ENCODE measurements at regions of chr17 and their contacts with region 1.

Region 1: GRCh38 chr17:29617125-29617480 is 5.6 kb downstream of the CORO6 start:
- DNase-seq: peak; percentile 77 to 91 (median 88)
- ATAC-seq: peak; percentile 80
- H3K4me3 ChIP-seq: peak overlapping the region; percentile 80
- H3K4me3 Mint-ChIP-seq: peak overlapping the region; percentile 78 to 93 (median 88)
- H3K27ac ChIP-seq: peak overlapping the region; percentile 38
- H3K27ac Mint-ChIP-seq: peak overlapping the region in 7 of 9 donors; percentile 2 to 91 (median 72)
- H3K4me1 ChIP-seq: peaks cover 36 to 42% of the 10 kb centered on the region in 2 donors
- H3K4me1 Mint-ChIP-seq: peaks cover 13 to 55% (median 38%) of the 10 kb centered on the region in 7 donors
- H3K27me3 ChIP-seq: no peaks in the 10 kb centered on the region
- H3K27me3 Mint-ChIP-seq: peaks cover 0 to 21% (median 0%) of the 10 kb centered on the region in 5 donors

Region 2: DNA sequence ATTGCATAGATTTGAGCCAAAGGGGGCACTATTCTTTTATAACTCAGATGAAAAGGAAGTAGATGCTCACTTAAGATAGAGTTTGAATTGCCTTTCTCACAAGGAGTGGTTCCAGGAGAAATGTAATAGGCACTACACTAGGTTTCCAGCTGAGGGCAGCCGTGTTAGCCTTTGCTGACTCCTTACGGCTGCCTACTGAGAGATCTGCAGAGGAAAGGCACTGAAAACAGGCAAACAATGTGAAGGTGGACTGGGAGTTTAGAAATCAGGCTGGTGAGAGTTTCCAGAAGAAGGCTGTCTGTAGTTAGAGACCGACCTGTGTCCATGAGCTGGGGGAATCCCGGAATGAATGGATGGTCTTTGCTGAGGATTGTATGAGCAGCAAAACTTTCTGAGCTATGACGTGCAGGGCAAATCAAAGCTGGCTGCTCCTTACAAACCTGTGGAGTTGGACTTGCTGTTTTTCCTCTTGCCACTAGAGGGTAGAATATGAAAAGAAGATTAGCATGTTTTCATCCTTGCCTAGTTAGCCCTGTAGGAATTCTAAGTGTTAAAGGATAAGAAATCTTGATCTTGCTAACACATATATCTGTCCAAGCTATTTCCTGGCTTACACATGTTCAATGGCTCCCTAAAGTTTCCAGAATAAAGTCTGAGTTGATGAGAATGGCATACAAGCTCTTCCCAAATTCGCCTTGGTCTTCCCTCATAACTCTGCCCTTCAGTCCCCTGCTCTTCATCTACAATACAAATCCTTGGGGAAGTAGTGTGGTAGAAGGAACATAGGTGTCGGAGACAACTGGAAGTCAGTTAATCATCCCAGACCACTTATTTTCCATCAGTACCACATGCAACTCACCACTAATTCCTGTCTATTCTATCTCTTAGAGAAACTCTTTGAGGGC is 247.0 kb before region 1 on chr17:
- CTCF ChIA-PET with region 1: interaction called, 4 read pairs
- POLR2A ChIA-PET with region 1: no interaction called
- intact Hi-C with region 1: loop called in 1 of 2 experiments (anchors 1 kb)
- DNase-seq: peak; percentile 25 to 80 (median 67)
- ATAC-seq: peak; percentile 95
- H3K4me3 ChIP-seq: no peak overlapping the region
- H3K4me3 Mint-ChIP-seq: no peak overlapping the region
- H3K27ac ChIP-seq: peak overlapping the region; percentile 63
- H3K27ac Mint-ChIP-seq: no peak overlapping the region
- H3K4me1 ChIP-seq: no peaks in the 10 kb centered on the region
- H3K4me1 Mint-ChIP-seq: no peaks in the 10 kb centered on the region
- H3K27me3 ChIP-seq: no peaks in the 10 kb centered on the region
- H3K27me3 Mint-ChIP-seq: peaks cover 0 to 2% (median 0%) of the 10 kb centered on the region in 5 donors

Region 3: DNA sequence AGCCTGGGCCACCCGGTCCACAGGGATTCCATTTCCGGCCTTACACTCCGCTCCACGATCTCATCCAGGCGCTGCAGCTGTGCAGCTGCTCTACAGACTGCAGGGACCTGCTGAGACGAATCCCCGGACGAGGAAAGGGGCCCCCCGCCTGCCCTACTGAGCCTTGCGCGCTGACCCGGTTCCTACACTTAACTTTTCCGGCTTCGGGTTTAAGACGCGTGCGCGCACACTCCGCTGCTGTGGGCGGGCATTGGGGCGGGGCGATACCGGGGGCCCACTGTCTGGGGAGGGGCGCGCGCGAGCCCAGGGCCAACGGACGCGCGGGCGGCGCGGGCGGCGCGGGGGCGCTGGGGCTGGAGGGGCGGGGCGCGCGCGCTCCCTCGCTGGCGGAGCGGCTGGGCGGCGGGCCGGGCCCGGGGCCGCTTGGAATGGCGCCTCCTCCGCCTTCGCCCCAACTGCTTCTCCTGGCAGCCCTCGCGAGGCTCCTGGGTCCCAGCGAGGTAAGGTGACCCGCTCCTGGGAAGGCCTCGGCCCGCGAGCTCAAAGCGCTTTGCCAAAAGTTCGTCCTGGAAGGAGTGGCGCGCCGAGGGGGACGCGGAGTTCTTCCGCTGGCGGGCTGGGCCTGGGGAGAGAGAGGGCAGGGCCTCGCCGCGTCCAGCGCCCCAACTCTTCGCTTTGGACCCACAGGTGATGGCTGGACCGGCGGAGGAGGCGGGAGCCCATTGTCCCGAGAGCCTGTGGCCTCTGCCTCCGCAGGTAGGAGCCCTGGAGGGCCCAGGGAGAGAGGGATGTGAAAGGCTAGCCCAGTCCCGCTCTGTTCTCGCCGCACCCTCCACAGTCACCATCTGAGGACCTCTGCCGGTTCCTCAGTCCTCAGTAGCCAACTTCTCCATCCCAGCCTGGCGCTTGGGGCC is 48.5 kb before region 1 on chr17 and contains the start of gene TP53I13:
- CTCF ChIA-PET with region 1: interaction called, 11 read pairs
- POLR2A ChIA-PET with region 1: interaction called, 59 read pairs
- intact Hi-C with region 1: loop called (anchors 1 kb)
- DNase-seq: peak; percentile 65 to 90 (median 81)
- ATAC-seq: peak; percentile 81
- H3K4me3 ChIP-seq: peak within 1 kb of the TSS; percentile 89
- H3K4me3 Mint-ChIP-seq: peak within 1 kb of the TSS; percentile 88 to 99 (median 95)
- H3K27ac ChIP-seq: peak within 1 kb of the TSS; percentile 78
- H3K27ac Mint-ChIP-seq: peak within 1 kb of the TSS; percentile 82 to 97 (median 92)
- H3K4me1 ChIP-seq: peaks cover 12 to 30% of the 10 kb centered on the region in 2 donors
- H3K4me1 Mint-ChIP-seq: peaks cover 21 to 42% (median 32%) of the 10 kb centered on the region in 7 donors
- H3K27me3 ChIP-seq: no peaks in the 10 kb centered on the region
- H3K27me3 Mint-ChIP-seq: no peaks in the 10 kb centered on the region
- total RNA-seq, gene TP53I13: 61.6 to 87.5 (median 62.8) TPM

Region 4: GRCh38 chr17:29589524-29590410 is 27.3 kb before region 1 on chr17 and contains the start of gene GIT1:
- CTCF ChIA-PET with region 1: interaction called, 56 read pairs
- POLR2A ChIA-PET with region 1: interaction called, 59 read pairs
- intact Hi-C with region 1: loop called (anchors 1 kb)
- DNase-seq: peak; percentile 77 to 88 (median 84)
- ATAC-seq: peak; percentile 93
- H3K4me3 ChIP-seq: peak within 1 kb of the TSS; percentile 72
- H3K4me3 Mint-ChIP-seq: peak within 1 kb of the TSS; percentile 88 to 96 (median 94)
- H3K27ac ChIP-seq: peak within 1 kb of the TSS; percentile 75
- H3K27ac Mint-ChIP-seq: peak within 1 kb of the TSS; percentile 78 to 94 (median 89)
- H3K4me1 ChIP-seq: peaks cover 58 to 65% of the 10 kb centered on the region in 2 donors
- H3K4me1 Mint-ChIP-seq: peaks cover 35 to 73% (median 66%) of the 10 kb centered on the region in 7 donors
- H3K27me3 ChIP-seq: no peaks in the 10 kb centered on the region
- H3K27me3 Mint-ChIP-seq: no peaks in the 10 kb centered on the region
- total RNA-seq, gene GIT1: 42.5 to 76.3 (median 62.4) TPM

Region 5: GRCh38 chr17:29682054-29682453 is 65.0 kb after region 1 on chr17:
- CTCF ChIA-PET with region 1: interaction called, 10 read pairs
- POLR2A ChIA-PET with region 1: no interaction called
- intact Hi-C with region 1: no loop called
- DNase-seq: peak in 2 of 9 donors; percentile 15 to 17
- ATAC-seq: peak; percentile 76
- H3K4me3 ChIP-seq: no peak overlapping the region
- H3K4me3 Mint-ChIP-seq: peak overlapping the region in 3 of 10 donors; percentile 0 to 7 (median 2)
- H3K27ac ChIP-seq: no peak overlapping the region
- H3K27ac Mint-ChIP-seq: peak overlapping the region in 7 of 9 donors; percentile 21 to 80 (median 43)
- H3K4me1 ChIP-seq: peaks cover 0 to 9% of the 10 kb centered on the region in 2 donors
- H3K4me1 Mint-ChIP-seq: peaks cover 12 to 51% (median 28%) of the 10 kb centered on the region in 7 donors
- H3K27me3 ChIP-seq: no peaks in the 10 kb centered on the region
- H3K27me3 Mint-ChIP-seq: no peaks in the 10 kb centered on the region

Region 6: GRCh38 chr17:29777663-29778062 is 160.6 kb after region 1 on chr17:
- CTCF ChIA-PET with region 1: interaction called, 37 read pairs
- POLR2A ChIA-PET with region 1: interaction called, 7 read pairs
- intact Hi-C with region 1: loop called (anchors 1 to 5 kb)
- DNase-seq: no peak
- ATAC-seq: no peak
- H3K4me3 ChIP-seq: no peak overlapping the region
- H3K4me3 Mint-ChIP-seq: no peak overlapping the region
- H3K27ac ChIP-seq: no peak overlapping the region
- H3K27ac Mint-ChIP-seq: no peak overlapping the region
- H3K4me1 ChIP-seq: peaks cover 0 to 5% of the 10 kb centered on the region in 2 donors
- H3K4me1 Mint-ChIP-seq: peaks cover 0 to 9% (median 8%) of the 10 kb centered on the region in 7 donors
- H3K27me3 ChIP-seq: no peaks in the 10 kb centered on the region
- H3K27me3 Mint-ChIP-seq: no peaks in the 10 kb centered on the region

Measured in naive thymus-derived CD4-positive, alpha-beta T cell (primary cell).